ENCODE measurements at regions of chr10 and their contacts with region 1.

Region 1: GRCh38 chr10:71270301-71271220 is 48.5 kb upstream of the SLC29A3 start:
- DNase-seq: peak; percentile 66 to 83 (median 78)
- H3K4me3 ChIP-seq: no peak overlapping the region
- H3K27ac ChIP-seq: no peak overlapping the region
- H3K4me1 ChIP-seq: peaks cover 3 to 38% (median 14%) of the 10 kb centered on the region in 4 experiments
- H3K27me3 ChIP-seq: no peaks in the 10 kb centered on the region

Region 2: DNA sequence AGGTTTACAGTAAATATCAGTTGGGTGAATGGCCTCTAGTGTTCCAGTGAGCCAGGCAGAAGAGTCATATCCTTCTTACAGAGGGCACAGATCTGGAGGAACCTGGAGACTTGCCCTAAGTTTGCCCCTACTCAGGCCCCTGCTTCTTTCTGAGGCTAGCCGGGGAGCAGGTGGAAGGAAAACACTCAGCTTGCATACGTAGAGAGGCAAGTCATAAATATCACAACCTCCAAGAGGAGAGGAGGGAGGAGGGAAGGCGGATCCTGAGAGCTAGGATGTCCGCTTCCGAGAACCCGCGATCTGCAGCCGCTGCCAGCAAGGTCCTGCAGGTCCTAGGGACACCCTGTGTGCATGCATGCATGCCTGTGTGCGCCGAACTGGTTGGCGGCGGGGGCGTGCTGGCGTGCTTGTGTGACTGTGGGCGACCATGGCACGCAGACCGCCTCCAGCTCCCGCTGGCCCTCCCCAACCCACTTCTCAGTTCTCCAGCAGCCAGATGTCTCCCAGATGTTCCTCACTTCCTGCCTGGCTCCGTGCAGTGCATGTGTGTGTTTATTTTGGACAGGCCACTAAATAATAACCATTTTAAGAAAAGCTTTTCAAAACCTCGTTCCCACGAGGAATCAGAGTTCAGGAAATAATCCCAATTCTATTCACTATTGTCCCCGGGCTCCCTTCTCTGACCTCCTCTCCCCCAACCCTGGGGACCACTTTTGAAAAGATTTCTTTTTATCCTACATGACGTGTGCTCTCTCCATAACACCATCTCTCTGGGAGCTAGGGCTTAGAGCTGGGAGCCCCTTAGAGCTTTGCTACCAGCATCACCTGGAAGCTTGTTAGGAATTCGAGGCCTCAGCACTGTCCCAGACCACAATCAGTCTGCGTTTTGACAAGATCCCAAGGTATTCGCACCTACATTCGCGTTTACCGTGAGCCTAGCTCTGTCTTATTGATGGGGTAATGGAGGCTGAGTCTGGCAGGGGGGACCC is 25.8 kb before region 1 on chr10:
- CTCF ChIA-PET with region 1: interaction called, 15 read pairs
- POLR2A ChIA-PET with region 1: no interaction called
- DNase-seq: peak; percentile 40 to 86 (median 84)
- H3K4me3 ChIP-seq: peak overlapping the region in 5 of 7 experiments; percentile 5 to 40 (median 11)
- H3K27ac ChIP-seq: no peak overlapping the region
- H3K4me1 ChIP-seq: peaks cover 7 to 97% (median 76%) of the 10 kb centered on the region in 4 experiments
- H3K27me3 ChIP-seq: no peaks in the 10 kb centered on the region

Region 3: DNA sequence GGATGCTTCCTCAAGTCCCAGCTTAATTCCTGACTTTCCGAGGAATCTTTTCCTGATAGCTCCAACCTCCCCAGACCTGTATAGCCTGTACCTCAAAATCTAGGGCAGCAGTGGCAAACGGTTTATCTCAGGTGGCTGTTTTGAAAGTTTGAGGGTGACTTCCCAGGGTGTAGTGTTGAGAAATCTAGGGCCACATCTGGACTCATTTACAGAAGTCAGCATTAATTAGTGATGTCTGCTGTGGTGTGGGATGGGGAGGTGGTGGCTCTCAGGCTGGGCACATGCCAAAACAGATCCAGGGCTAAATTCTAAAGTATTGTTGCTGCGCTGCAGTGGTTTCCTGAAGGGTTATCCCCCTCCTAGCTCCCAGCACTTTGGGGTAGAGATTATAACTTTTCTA is 20.2 kb before region 1 on chr10:
- CTCF ChIA-PET with region 1: interaction called, 15 read pairs
- POLR2A ChIA-PET with region 1: no interaction called
- DNase-seq: peak in 2 of 3 donors; percentile 60 to 63
- H3K4me3 ChIP-seq: no peak overlapping the region
- H3K27ac ChIP-seq: no peak overlapping the region
- H3K4me1 ChIP-seq: peaks cover 7 to 47% (median 29%) of the 10 kb centered on the region in 4 experiments
- H3K27me3 ChIP-seq: no peaks in the 10 kb centered on the region

Measured in common myeloid progenitor, CD34-positive (primary cell).